ENCODE measurements at regions of chr6 and their contacts with region 1.

Region 1: GRCh38 chr6:85678602-85679444 is 36.1 kb upstream of the SYNCRIP start:
- DNase-seq: peak; percentile 96
- H3K4me3 ChIP-seq: peak overlapping the region; percentile 78 to 96
- H3K27ac ChIP-seq: peak overlapping the region; percentile 88 to 91
- H3K4me1 ChIP-seq: peaks cover 6 to 10% of the 10 kb centered on the region in 2 experiments; a peak in 3 of 4 replicates
- H3K27me3 ChIP-seq: no peaks in the 10 kb centered on the region
- CTCF ChIP-seq: no peak
- EP300 ChIP-seq: peak in 1 of 2 experiments; percentile 30; a peak in 1 of 4 replicates
- RAD21 ChIP-seq: no peak

Region 2: DNA sequence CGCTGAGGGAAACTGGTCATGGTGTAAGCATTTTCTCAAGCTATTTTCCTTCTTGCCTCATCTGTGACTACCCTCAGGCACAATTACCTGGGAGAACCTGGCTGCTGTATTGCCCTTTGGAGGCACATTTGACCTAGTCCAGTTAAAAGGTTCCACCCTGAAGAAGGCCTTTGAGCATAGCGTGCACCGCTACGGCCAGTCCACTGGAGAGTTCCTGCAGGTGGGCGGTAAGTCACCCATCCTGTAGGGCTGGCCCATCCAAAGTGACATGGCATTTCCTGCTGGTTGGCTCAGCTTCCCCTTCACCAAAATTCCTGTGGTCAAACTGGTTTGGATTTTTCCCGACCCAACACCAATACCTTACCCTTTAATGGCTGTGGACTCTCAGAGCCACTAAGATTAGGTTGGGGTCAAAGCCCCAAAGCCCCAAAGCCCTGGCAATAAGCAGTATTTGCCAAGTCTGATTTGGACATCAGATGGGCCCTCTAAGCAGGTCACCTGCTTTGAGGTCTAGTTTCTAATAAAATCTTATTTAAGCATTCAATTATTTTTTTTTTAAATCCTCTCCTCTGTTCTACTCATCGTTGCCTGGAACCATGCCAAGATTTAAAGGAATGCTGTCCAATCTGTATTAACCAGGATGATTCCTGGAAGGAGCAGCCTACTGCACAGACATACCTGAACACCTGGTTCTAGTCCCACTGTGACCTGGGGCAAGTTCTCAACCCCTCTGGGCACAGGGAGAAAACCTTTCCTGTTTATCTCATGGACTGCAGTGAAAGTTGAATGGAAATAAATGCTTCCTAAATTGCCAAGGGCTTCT is 188.2 kb before region 1 on chr6:
- CTCF ChIA-PET with region 1: no interaction called
- POLR2A ChIA-PET with region 1: no interaction called
- DNase-seq: no peak
- H3K4me3 ChIP-seq: no peak overlapping the region
- H3K27ac ChIP-seq: peak overlapping the region; percentile 21 to 76
- H3K4me1 ChIP-seq: peaks cover 3 to 11% of the 10 kb centered on the region in 2 experiments; a peak in 3 of 4 replicates
- H3K27me3 ChIP-seq: no peaks in the 10 kb centered on the region
- CTCF ChIP-seq: no peak
- EP300 ChIP-seq: peak; percentile 23 to 62; a peak in 2 of 4 replicates
- RAD21 ChIP-seq: no peak

Region 3: GRCh38 chr6:85593438-85594196 is 85.2 kb before region 1 on chr6 and contains the start of gene SNX14:
- CTCF ChIA-PET with region 1: interaction called, 5 read pairs
- POLR2A ChIA-PET with region 1: interaction called, 24 read pairs
- DNase-seq: peak; percentile 94
- H3K4me3 ChIP-seq: peak within 1 kb of the TSS; percentile 88 to 92
- H3K27ac ChIP-seq: peak within 1 kb of the TSS; percentile 93 to 96
- H3K4me1 ChIP-seq: peaks cover 0 to 6% of the 10 kb centered on the region in 2 experiments; a peak in 2 of 4 replicates
- H3K27me3 ChIP-seq: no peaks in the 10 kb centered on the region
- CTCF ChIP-seq: peak; percentile 19; the same call in 1 of the 2 replicates
- EP300 ChIP-seq: no peak
- RAD21 ChIP-seq: no peak
- polyA plus RNA-seq, gene SNX14: 40.4 and 53.9 TPM in 2 replicates

Region 4: DNA sequence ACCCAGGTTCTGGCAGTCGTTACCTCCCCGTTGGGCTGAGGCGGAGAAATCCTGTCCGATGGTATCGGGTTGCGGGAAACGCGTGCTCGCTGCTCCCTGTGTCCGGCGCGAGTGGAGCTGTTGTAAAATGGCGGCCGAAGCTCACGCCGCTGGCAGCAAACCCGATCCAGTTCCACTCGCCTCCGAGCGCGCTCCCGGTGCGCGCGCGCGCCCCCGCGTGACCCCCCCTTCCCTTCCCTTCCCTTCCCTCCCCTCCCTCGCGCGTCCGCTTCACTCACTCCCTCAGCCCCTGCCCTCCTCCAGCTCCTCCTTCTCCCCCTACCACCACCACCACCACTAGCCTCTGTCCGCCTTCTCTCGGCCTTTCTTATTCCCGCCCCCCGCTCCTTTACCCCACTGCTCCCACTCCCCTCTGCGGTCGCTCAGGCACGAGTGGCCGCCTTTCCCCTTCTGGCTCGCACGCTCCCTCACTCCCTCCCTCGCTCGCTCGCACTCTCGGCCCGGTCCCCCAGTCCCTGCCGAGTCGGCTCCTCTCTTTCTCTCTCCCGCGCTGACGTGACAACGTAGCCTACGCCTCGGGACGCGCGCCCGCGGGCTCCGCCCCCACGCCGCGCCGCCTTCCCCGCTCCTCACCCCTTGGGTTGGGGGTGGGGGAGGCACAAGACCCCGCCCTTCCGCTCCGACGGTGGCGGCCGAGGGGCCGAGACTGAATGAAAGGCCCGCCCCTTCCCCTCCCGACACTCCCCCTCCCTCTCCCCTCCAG is 35.9 kb before region 1 on chr6 and contains the start of gene SYNCRIP:
- CTCF ChIA-PET with region 1: interaction called, 6 read pairs
- POLR2A ChIA-PET with region 1: interaction called, 149 read pairs
- DNase-seq: peak; percentile 92
- H3K4me3 ChIP-seq: peak within 1 kb of the TSS; percentile 95 to 97
- H3K27ac ChIP-seq: peak within 1 kb of the TSS; percentile 99
- H3K4me1 ChIP-seq: peaks cover 10 to 12% of the 10 kb centered on the region in 2 experiments; a peak in 3 of 4 replicates
- H3K27me3 ChIP-seq: no peaks in the 10 kb centered on the region
- CTCF ChIP-seq: no peak
- EP300 ChIP-seq: 0 out of 4 replicates have a peak, but pooled peaks of 1 of the 2 experiments have one; percentile 3
- RAD21 ChIP-seq: no peak
- polyA plus RNA-seq, gene SYNCRIP: 15.9 and 17.8 TPM in 2 replicates

Region 5: GRCh38 chr6:85650606-85651005 is 28.2 kb before region 1 on chr6:
- CTCF ChIA-PET with region 1: no interaction called
- POLR2A ChIA-PET with region 1: interaction called, 149 read pairs
- DNase-seq: no peak
- H3K4me3 ChIP-seq: no peak overlapping the region
- H3K27ac ChIP-seq: no peak overlapping the region
- H3K4me1 ChIP-seq: no peaks in the 10 kb centered on the region
- H3K27me3 ChIP-seq: no peaks in the 10 kb centered on the region
- CTCF ChIP-seq: no peak
- EP300 ChIP-seq: no peak
- RAD21 ChIP-seq: no peak

Region 6: GRCh38 chr6:85660181-85660611 is 18.6 kb before region 1 on chr6:
- CTCF ChIA-PET with region 1: no interaction called
- POLR2A ChIA-PET with region 1: interaction called, 12 read pairs
- DNase-seq: peak; percentile 64
- H3K4me3 ChIP-seq: peak overlapping the region; percentile 25 to 46; a peak in 3 of 4 replicates
- H3K27ac ChIP-seq: peak overlapping the region; percentile 78 to 86
- H3K4me1 ChIP-seq: peaks cover 4 to 8% of the 10 kb centered on the region in 2 experiments; a peak in 2 of 4 replicates
- H3K27me3 ChIP-seq: no peaks in the 10 kb centered on the region
- CTCF ChIP-seq: peak; percentile 39
- EP300 ChIP-seq: no peak
- RAD21 ChIP-seq: peak; percentile 45

Region 7: GRCh38 chr6:85744433-85744970 is 65.7 kb after region 1 on chr6:
- CTCF ChIA-PET with region 1: no interaction called
- POLR2A ChIA-PET with region 1: no interaction called
- DNase-seq: no peak
- H3K4me3 ChIP-seq: no peak overlapping the region
- H3K27ac ChIP-seq: no peak overlapping the region
- H3K4me1 ChIP-seq: no peaks in the 10 kb centered on the region
- H3K27me3 ChIP-seq: no peaks in the 10 kb centered on the region
- CTCF ChIP-seq: no peak
- EP300 ChIP-seq: no peak
- RAD21 ChIP-seq: no peak

Region 8: GRCh38 chr6:86937219-86938079 is 1258.6 kb after region 1 on chr6 and contains the start of gene HTR1E:
- CTCF ChIA-PET with region 1: interaction called, 3 read pairs
- POLR2A ChIA-PET with region 1: interaction called, 12 read pairs
- DNase-seq: peak; percentile 86
- H3K4me3 ChIP-seq: peak within 1 kb of the TSS; percentile 50 to 59
- H3K27ac ChIP-seq: peak within 1 kb of the TSS in 1 of 2 experiments; percentile 95; a peak in 2 of 4 replicates
- H3K4me1 ChIP-seq: peaks cover 0 to 15% of the 10 kb centered on the region in 2 experiments; a peak in 1 of 4 replicates
- H3K27me3 ChIP-seq: peaks cover 9% of the 10 kb centered on the region; the same call in 1 of the 2 replicates
- CTCF ChIP-seq: peak; percentile 57
- EP300 ChIP-seq: no peak
- RAD21 ChIP-seq: peak; percentile 86
- polyA plus RNA-seq, gene HTR1E: 0.02 and 0.03 TPM in 2 replicates